Natural killer cell (primary cell): ENCODE measurements at regions of chr15 and their contacts with region 1.

Region 1: DNA sequence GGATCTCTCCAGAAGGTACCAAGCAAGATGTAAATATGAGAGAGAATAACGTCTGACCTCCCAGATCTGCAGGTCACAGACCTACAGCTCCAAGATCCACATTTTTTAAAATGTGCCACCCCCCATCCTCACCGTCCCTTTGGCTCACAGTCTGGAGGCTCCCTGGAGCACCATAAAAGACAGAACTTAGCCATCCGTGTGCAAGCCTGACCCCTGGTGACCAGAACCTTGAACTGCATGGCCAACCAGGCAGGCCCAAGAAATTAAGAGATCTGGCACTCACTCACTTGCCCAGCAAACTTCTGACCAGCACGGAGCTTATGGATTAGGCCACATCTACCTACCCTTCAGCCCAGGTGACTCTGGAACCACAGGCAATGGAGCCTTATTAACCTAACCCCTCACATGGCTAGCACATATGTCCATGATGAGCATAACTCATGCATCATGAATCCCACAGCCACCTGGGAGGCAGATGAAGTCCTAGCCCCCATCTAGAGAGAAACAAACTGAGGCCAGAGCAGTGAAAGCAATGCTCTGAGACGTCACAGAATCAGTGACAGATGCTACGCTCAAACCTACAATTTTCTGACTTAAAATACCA is 275.3 kb downstream of the UACA start:
- DNase-seq: peak; percentile 75 to 87
- ATAC-seq: peak; percentile 17 to 46 (median 23)
- H3K4me3 ChIP-seq: no peak overlapping the region
- H3K4me3 Mint-ChIP-seq: peak overlapping the region; percentile 49
- H3K27ac ChIP-seq: no peak overlapping the region
- H3K27ac Mint-ChIP-seq: peak overlapping the region in 1 of 2 donors; percentile 86
- H3K4me1 ChIP-seq: peaks cover 65% of the 10 kb centered on the region
- H3K4me1 Mint-ChIP-seq: peaks cover 50 to 79% of the 10 kb centered on the region in 2 donors
- H3K27me3 ChIP-seq: peaks cover 23% of the 10 kb centered on the region
- H3K27me3 Mint-ChIP-seq: peaks cover 34 to 37% of the 10 kb centered on the region in 2 donors
- CTCF ChIP-seq: peak; percentile 88

Region 2: DNA sequence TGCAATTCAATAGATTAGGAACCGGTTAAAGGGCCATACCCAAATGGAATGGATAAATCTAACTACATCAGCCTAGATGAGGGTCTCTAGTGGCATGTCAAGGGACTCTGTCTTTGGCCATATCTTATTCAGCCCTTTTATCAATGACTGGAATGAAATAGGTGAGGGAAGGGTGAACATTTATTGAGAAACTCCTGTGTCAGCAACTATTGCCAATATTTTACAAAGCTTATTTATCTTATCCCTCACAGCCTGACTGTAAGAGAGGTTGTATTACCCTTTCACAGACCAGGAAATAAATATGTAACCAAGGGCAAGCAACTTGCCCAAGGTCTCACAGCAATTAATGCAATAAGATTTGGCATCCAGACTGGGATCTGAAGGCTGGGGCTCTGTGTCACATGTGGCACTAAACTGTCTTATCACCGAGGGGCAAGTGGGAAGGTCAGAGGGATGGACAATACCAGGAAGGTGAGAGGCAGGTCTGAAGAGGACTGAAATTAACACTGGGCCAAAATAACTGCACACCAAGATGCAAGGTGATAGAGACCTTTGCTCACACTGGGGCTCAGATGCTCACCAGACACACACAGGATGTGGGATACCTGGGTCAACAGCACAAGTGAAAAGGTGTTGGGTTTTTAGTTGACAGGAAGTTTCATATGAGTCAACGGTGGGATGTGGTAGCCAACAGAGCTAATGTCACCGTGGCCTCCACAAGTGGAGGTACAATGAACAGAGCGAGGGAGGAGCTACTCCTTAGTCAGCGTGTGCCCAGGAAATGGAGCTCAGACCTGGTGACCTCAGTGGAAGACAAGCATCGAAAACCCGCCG is 774.2 kb before region 1 on chr15:
- intact Hi-C with region 1: loop called (anchors 1 kb)
- DNase-seq: peak; percentile 65 to 91
- ATAC-seq: peak; percentile 84 to 91 (median 89)
- H3K4me3 ChIP-seq: no peak overlapping the region
- H3K4me3 Mint-ChIP-seq: peak overlapping the region; percentile 81
- H3K27ac ChIP-seq: peak overlapping the region; percentile 67
- H3K27ac Mint-ChIP-seq: peak overlapping the region; percentile 87 to 90
- H3K4me1 ChIP-seq: peaks cover 62% of the 10 kb centered on the region
- H3K4me1 Mint-ChIP-seq: peaks cover 65 to 72% of the 10 kb centered on the region in 2 donors
- H3K27me3 ChIP-seq: no peaks in the 10 kb centered on the region
- H3K27me3 Mint-ChIP-seq: no peaks in the 10 kb centered on the region
- CTCF ChIP-seq: no peak

Region 3: GRCh38 chr15:70023064-70023768 is 464.9 kb before region 1 on chr15:
- intact Hi-C with region 1: loop called (anchors 5 kb)
- DNase-seq: peak; percentile 47 to 89
- ATAC-seq: peak; percentile 95 to 99 (median 95)
- H3K4me3 ChIP-seq: no peak overlapping the region
- H3K4me3 Mint-ChIP-seq: peak overlapping the region; percentile 42
- H3K27ac ChIP-seq: peak overlapping the region; percentile 32
- H3K27ac Mint-ChIP-seq: peak overlapping the region; percentile 37 to 86
- H3K4me1 ChIP-seq: peaks cover 20% of the 10 kb centered on the region
- H3K4me1 Mint-ChIP-seq: peaks cover 22 to 30% of the 10 kb centered on the region in 2 donors
- H3K27me3 ChIP-seq: no peaks in the 10 kb centered on the region
- H3K27me3 Mint-ChIP-seq: peaks cover 21 to 50% of the 10 kb centered on the region in 2 donors
- CTCF ChIP-seq: no peak

Region 4: DNA sequence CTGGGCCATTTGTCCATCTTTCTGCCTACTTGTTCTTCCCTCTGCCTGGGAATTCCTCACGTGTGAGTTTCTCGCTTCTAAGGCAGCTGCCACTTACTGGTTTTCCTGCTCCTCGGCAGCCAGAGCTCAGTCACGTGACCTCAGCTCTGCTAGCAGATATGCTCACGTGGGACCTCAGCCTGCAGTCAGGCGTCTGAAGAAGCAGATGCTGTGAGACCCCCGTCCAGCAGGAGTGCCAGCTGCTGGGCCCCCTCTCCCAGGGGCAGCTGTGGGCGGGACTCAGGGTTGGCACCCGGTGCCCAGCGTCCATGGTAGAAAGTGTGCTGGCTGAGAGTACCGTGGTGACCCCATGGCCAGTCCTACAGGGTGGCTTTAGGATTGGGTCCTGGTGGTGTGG is 229.1 kb before region 1 on chr15:
- intact Hi-C with region 1: loop called (anchors 5 kb)
- DNase-seq: peak; percentile 34 to 84
- ATAC-seq: peak; percentile 49 to 60 (median 52)
- H3K4me3 ChIP-seq: no peak overlapping the region
- H3K4me3 Mint-ChIP-seq: peak overlapping the region; percentile 82
- H3K27ac ChIP-seq: peak overlapping the region; percentile 16
- H3K27ac Mint-ChIP-seq: peak overlapping the region; percentile 31 to 78
- H3K4me1 ChIP-seq: peaks cover 50% of the 10 kb centered on the region
- H3K4me1 Mint-ChIP-seq: peaks cover 53 to 67% of the 10 kb centered on the region in 2 donors
- H3K27me3 ChIP-seq: no peaks in the 10 kb centered on the region
- H3K27me3 Mint-ChIP-seq: peaks cover 31 to 34% of the 10 kb centered on the region in 2 donors
- CTCF ChIP-seq: no peak

Region 5: GRCh38 chr15:70508561-70509281 is 20.6 kb after region 1 on chr15:
- intact Hi-C with region 1: loop called (anchors 2 kb)
- DNase-seq: no peak
- ATAC-seq: peak in 1 of 3 donors; percentile 15
- H3K4me3 ChIP-seq: no peak overlapping the region
- H3K4me3 Mint-ChIP-seq: peak overlapping the region; percentile 65
- H3K27ac ChIP-seq: no peak overlapping the region
- H3K27ac Mint-ChIP-seq: peak overlapping the region in 1 of 2 donors; percentile 56
- H3K4me1 ChIP-seq: peaks cover 49% of the 10 kb centered on the region
- H3K4me1 Mint-ChIP-seq: peaks cover 36 to 44% of the 10 kb centered on the region in 2 donors
- H3K27me3 ChIP-seq: no peaks in the 10 kb centered on the region
- H3K27me3 Mint-ChIP-seq: peaks cover 10 to 43% of the 10 kb centered on the region in 2 donors
- CTCF ChIP-seq: no peak